ENCODE measurements at regions of chr10 and their contacts with region 1.

Region 1: DNA sequence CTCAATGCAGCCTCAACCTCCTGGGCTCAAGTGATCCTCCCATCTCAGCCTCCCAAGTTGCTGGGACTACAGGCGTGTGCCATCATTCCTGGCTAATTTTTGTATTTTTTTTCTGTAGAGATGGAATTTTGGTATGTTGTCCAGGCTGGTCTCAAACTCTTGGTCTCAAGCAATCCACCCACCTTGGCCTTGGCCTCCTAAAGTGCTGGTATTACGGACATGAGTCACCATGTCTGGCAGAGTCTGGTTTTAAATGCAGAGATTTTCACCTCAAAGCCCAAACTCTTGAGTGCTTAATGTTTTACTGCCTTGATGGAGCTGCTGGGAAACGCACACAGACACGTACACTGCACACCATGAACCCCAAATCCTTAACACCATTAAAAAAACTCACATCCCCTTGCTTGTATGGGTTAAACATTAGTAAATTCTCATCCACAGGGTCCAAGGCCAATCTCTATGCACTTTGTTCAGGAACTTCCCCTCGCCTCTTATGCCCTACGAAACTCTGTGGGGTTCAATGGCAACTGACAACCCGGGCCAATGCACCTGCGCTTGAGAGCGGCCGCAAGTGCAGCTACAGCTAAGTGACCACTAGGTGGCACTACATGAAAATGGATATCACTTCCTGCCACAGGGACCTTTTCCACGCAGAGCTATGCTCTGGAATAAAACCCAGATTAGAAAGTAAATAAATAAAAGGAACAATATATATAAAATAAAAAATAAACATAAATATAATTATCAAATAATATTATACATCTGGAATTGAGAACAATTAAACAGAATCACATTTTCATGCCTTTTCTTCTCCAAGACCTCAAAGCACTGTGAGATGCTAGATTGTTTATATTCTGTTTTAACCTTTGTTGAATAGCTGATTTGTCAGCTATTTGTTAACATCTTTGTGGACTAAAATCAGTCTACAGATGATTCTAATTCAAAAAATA is 66.9 kb upstream of the AFAP1L2 start:
- DNase-seq: peak; percentile 59 to 77 (median 63)
- ATAC-seq: peak; percentile 52 to 81 (median 74)
- H3K4me3 ChIP-seq: no peak overlapping the region
- H3K27ac ChIP-seq: peak overlapping the region in 8 of 12 donors; percentile 9 to 60 (median 28)
- H3K4me1 ChIP-seq: peaks cover 0 to 46% (median 17%) of the 10 kb centered on the region in 12 donors
- H3K27me3 ChIP-seq: no peaks in the 10 kb centered on the region
- CTCF ChIP-seq: peak; percentile 83 to 96 (median 92)
- POLR2A ChIP-seq: no peak

Region 2: GRCh38 chr10:114507449-114507848 is 36.2 kb after region 1 on chr10:
- intact Hi-C with region 1: no loop called
- DNase-seq: peak; percentile 52 to 72 (median 69)
- ATAC-seq: peak; percentile 51 to 79 (median 72)
- H3K4me3 ChIP-seq: no peak overlapping the region
- H3K27ac ChIP-seq: peak overlapping the region; percentile 2 to 81 (median 69)
- H3K4me1 ChIP-seq: peaks cover 3 to 82% (median 55%) of the 10 kb centered on the region in 12 donors
- H3K27me3 ChIP-seq: no peaks in the 10 kb centered on the region
- CTCF ChIP-seq: no peak
- POLR2A ChIP-seq: no peak

Region 3: GRCh38 chr10:114623661-114624294 is 152.5 kb after region 1 on chr10:
- intact Hi-C with region 1: loop called in 1 of 10 experiments (anchors 10 kb)
- DNase-seq: no peak
- ATAC-seq: peak in 3 of 4 donors; percentile 46 to 61 (median 50)
- H3K4me3 ChIP-seq: peak overlapping the region in 2 of 12 donors; percentile 8 to 15
- H3K27ac ChIP-seq: peak overlapping the region; percentile 7 to 91 (median 54)
- H3K4me1 ChIP-seq: peaks cover 14 to 96% (median 59%) of the 10 kb centered on the region in 12 donors
- H3K27me3 ChIP-seq: no peaks in the 10 kb centered on the region
- CTCF ChIP-seq: no peak
- POLR2A ChIP-seq: no peak

Region 4: GRCh38 chr10:114694752-114695151 is 223.5 kb after region 1 on chr10:
- intact Hi-C with region 1: loop called in 4 of 10 experiments (anchors 5 to 10 kb)
- DNase-seq: no peak
- ATAC-seq: no peak
- H3K4me3 ChIP-seq: no peak overlapping the region
- H3K27ac ChIP-seq: peak overlapping the region in 8 of 12 donors; percentile 12 to 78 (median 42)
- H3K4me1 ChIP-seq: peaks cover 4 to 68% (median 47%) of the 10 kb centered on the region in 12 donors
- H3K27me3 ChIP-seq: no peaks in the 10 kb centered on the region
- CTCF ChIP-seq: peak in 11 of 12 donors; percentile 21 to 56 (median 37)
- POLR2A ChIP-seq: no peak

Region 5: GRCh38 chr10:114708717-114709335 is 237.6 kb after region 1 on chr10:
- intact Hi-C with region 1: loop called in 4 of 10 experiments (anchors 5 to 10 kb)
- DNase-seq: no peak
- ATAC-seq: no peak
- H3K4me3 ChIP-seq: no peak overlapping the region
- H3K27ac ChIP-seq: peak overlapping the region in 5 of 12 donors; percentile 15 to 59 (median 27)
- H3K4me1 ChIP-seq: peaks cover 6 to 84% (median 33%) of the 10 kb centered on the region in 12 donors
- H3K27me3 ChIP-seq: no peaks in the 10 kb centered on the region
- CTCF ChIP-seq: no peak
- POLR2A ChIP-seq: no peak

Region 6: GRCh38 chr10:114795039-114795438 is 323.8 kb after region 1 on chr10:
- intact Hi-C with region 1: loop called in 2 of 10 experiments (anchors 5 to 10 kb)
- DNase-seq: no peak
- ATAC-seq: no peak
- H3K4me3 ChIP-seq: no peak overlapping the region
- H3K27ac ChIP-seq: no peak overlapping the region
- H3K4me1 ChIP-seq: no peaks in the 10 kb centered on the region
- H3K27me3 ChIP-seq: no peaks in the 10 kb centered on the region
- CTCF ChIP-seq: no peak
- POLR2A ChIP-seq: no peak

Measured in heart left ventricle (tissue), 16 donors.